Activated CD4-positive, alpha-beta T cell treated with anti-CD3 and anti-CD28 coated beads for 36 hours (primary cell): ENCODE measurements at regions of chr1 and their contacts with region 1.

Region 1: GRCh38 chr1:241918879-241919278 is 38.7 kb upstream of the BECN2 start:
- DNase-seq: no peak
- ATAC-seq: no peak
- H3K4me3 Mint-ChIP-seq: no peak overlapping the region
- H3K27ac Mint-ChIP-seq: no peak overlapping the region
- H3K4me1 Mint-ChIP-seq: no peaks in the 10 kb centered on the region
- H3K27me3 Mint-ChIP-seq: no peaks in the 10 kb centered on the region

Region 2: GRCh38 chr1:241932845-241933244 is 14.0 kb after region 1 on chr1:
- CTCF ChIA-PET with region 1: no interaction called
- POLR2A ChIA-PET with region 1: no interaction called
- intact Hi-C with region 1: no loop called
- DNase-seq: no peak
- ATAC-seq: no peak
- H3K4me3 Mint-ChIP-seq: no peak overlapping the region
- H3K27ac Mint-ChIP-seq: no peak overlapping the region
- H3K4me1 Mint-ChIP-seq: no peaks in the 10 kb centered on the region
- H3K27me3 Mint-ChIP-seq: peaks cover 3% of the 10 kb centered on the region

Region 3: DNA sequence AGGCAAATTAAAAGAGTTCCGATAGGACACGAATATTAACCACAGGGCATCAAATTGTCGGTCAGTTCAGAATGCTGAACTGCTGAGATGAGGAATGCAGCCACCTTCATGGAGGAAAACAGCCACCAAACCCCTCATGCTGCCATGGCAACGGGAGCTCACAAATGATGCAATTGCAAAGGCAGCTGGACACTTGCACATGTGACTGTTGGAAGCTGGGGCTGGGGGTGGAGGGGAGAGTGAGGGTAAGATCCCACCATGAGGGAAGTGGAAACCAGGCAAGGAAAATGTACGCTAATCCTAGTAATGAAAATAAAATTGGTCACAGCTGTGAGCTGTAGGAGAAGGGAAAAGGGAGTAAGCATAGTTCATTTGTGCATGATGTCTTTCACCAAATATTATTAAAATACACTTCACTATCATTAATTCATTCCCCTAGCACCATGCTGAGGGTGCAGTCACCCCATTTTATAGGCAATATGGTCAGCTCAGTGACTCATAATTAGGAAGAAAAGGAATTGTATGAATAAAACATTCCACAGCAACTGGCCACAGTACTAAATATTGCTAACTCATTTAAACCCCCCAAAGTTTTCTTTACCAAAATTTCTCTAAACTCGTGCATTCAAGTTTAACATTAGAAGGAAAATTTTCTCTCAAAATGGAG is 54.0 kb after region 1 on chr1:
- CTCF ChIA-PET with region 1: no interaction called
- POLR2A ChIA-PET with region 1: no interaction called
- intact Hi-C with region 1: loop called in 1 of 2 experiments (anchors 5 kb)
- DNase-seq: no peak
- ATAC-seq: no peak
- H3K4me3 Mint-ChIP-seq: no peak overlapping the region
- H3K27ac Mint-ChIP-seq: no peak overlapping the region
- H3K4me1 Mint-ChIP-seq: no peaks in the 10 kb centered on the region
- H3K27me3 Mint-ChIP-seq: no peaks in the 10 kb centered on the region